ENCODE measurements at regions of chr1 and their contacts with region 1.

Region 1: DNA sequence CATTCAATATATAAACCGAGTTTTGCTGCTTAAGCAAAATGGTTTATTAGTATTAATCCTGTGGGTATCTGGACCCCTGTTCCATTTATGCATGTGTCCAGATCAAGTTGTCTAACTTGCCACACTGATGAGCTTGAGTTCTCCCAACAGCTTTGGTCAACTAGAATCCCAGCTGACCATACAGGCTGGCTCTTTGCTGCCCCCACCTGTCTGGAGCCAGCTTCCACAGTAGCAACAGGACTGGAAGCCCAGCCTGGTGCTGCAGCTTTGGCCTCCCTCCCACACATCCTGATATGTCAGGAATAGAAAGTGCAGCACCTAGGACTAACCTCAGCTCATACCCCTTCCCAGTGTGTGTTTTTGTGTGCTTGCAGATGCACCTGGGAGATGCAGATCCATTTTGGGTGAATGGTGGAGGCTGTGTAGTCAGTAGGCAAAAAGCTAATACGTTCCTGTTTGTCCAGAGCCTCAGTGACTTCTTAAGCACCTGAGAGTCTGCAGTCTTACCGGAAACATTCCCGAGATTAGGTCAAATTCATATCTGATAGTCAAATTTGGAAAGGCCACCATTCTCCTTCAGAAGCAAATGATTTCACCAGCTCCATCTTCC is 40.9 kb upstream of the BEND5 start:
- DNase-seq: peak; percentile 65 to 73
- H3K4me3 ChIP-seq: no peak overlapping the region
- H3K27ac ChIP-seq: no peak overlapping the region
- H3K4me1 ChIP-seq: no peaks in the 10 kb centered on the region
- H3K27me3 ChIP-seq: no peaks in the 10 kb centered on the region
- CTCF ChIP-seq: peak in 5 of 6 experiments; percentile 29 to 83 (median 55)
- POLR2A ChIP-seq: no peak

Region 2: GRCh38 chr1:48677306-48678287 is 140.0 kb before region 1 on chr1:
- intact Hi-C with region 1: loop called (anchors 5 kb)
- DNase-seq: peak; percentile 61 to 72
- H3K4me3 ChIP-seq: no peak overlapping the region
- H3K27ac ChIP-seq: no peak overlapping the region
- H3K4me1 ChIP-seq: peaks cover 0 to 14% of the 10 kb centered on the region in 2 donors
- H3K27me3 ChIP-seq: no peaks in the 10 kb centered on the region
- CTCF ChIP-seq: peak; percentile 41 to 54 (median 46)
- POLR2A ChIP-seq: no peak

Region 3: DNA sequence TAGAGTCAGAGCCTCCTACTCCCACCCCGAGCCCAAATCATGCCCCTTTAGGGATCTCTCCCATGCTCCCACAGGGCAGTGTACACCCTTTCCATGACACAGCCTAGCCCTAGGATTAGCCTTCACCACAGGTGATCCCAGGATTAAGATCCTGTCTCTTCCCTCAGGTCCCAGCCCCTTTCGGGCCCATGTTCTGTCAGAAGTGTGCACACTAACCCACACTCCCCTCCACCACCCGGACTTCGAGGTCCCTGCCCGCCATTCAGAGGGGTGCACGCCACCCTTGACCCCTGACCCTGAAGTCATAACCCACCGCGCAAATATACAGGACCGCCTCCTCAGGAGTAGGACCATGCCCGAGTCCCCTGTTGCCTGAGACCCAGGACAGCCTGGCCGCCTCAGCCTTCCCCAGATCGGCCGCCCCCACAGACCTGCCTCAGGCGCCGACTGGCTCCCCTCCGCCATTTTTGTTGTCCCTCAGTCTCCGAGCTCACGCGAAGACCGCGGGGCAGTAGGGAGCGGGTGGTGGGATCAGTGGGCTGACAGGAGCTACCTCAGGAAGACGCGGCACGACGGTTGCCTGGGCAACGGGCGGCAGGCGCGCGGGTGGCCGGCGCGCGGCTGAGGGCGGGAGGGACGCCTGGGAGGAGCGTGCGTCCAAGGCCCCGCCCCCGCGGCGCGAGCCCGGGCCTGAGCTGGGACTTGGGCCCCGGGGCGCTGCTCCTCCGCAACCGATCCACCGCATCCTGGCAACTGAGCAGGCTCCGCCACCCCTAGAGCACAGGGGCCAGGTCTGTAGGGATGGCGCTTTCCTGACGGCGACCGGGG is 1205.9 kb after region 1 on chr1 and contains the start of gene AGBL4:
- intact Hi-C with region 1: no loop called
- DNase-seq: peak; percentile 74 to 75
- H3K4me3 ChIP-seq: peak within 1 kb of the TSS in 2 of 3 donors; percentile 52 to 76
- H3K27ac ChIP-seq: peak within 1 kb of the TSS in 1 of 3 donors; percentile 27
- H3K4me1 ChIP-seq: no peaks in the 10 kb centered on the region
- H3K27me3 ChIP-seq: no peaks in the 10 kb centered on the region
- CTCF ChIP-seq: no peak
- POLR2A ChIP-seq: peak in 1 of 2 donors; percentile 20
- total RNA-seq, gene AGBL4: 2.1 to 6.0 (median 4.8) TPM

Measured in thyroid gland (tissue), 4 donors.